Breast epithelium (tissue), 4 donors: ENCODE measurements at regions of chrX and their contacts with region 1.

Region 1: GRCh38 chrX:70485466-70485865 is 40.8 kb downstream of the DLG3 start:
- DNase-seq: no peak
- H3K4me3 ChIP-seq: no peak overlapping the region
- H3K27ac ChIP-seq: no peak overlapping the region
- H3K4me1 ChIP-seq: no peaks in the 10 kb centered on the region
- H3K27me3 ChIP-seq: peaks cover 0 to 24% of the 10 kb centered on the region in 2 donors
- CTCF ChIP-seq: no peak
- POLR2A ChIP-seq: no peak

Region 2: DNA sequence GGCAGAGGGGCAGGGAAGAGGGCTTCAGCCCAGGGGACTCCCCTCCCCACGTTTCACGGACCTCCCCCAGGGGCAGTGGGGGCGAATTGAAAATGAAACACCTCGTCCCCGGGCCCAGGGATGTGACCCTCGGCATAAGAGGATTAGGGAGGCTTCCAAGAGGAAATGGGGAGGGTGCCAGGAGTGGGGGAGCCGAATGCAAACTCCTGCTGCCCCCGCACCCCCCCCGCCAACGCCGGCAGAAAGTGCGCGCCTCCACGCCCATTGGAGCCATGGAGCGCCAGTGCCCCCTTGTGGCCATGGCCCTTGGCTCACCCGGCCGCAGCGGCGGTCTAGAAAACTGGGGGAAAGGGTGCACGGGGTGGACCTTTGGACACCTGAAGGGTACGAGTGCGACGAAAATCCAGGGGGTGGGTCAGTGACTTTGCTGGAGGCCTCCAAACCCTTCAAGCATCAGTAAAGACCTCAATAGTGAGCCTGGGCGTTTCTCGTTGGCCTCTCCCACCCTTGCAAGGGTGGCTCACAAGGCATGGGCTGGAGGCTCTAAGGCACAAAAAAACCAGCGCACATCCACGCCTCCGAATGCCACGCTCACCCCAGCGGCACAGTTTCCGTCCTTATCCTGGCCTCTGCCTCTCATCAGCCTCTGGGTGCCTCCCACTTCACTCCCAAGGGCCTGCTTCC is 1199.4 kb before region 1 on chrX:
- intact Hi-C with region 1: loop called (anchors 5 kb)
- DNase-seq: peak; percentile 23 to 55
- H3K4me3 ChIP-seq: peak overlapping the region; percentile 43 to 68 (median 51)
- H3K27ac ChIP-seq: peak overlapping the region; percentile 60 to 79
- H3K4me1 ChIP-seq: no peaks in the 10 kb centered on the region
- H3K27me3 ChIP-seq: peaks cover 0 to 79% of the 10 kb centered on the region in 2 donors
- CTCF ChIP-seq: peak; percentile 59 to 85 (median 65)
- POLR2A ChIP-seq: no peak